KBM-7 (cell line): ENCODE measurements at regions of chr12 and their contacts with region 1.

Region 1: DNA sequence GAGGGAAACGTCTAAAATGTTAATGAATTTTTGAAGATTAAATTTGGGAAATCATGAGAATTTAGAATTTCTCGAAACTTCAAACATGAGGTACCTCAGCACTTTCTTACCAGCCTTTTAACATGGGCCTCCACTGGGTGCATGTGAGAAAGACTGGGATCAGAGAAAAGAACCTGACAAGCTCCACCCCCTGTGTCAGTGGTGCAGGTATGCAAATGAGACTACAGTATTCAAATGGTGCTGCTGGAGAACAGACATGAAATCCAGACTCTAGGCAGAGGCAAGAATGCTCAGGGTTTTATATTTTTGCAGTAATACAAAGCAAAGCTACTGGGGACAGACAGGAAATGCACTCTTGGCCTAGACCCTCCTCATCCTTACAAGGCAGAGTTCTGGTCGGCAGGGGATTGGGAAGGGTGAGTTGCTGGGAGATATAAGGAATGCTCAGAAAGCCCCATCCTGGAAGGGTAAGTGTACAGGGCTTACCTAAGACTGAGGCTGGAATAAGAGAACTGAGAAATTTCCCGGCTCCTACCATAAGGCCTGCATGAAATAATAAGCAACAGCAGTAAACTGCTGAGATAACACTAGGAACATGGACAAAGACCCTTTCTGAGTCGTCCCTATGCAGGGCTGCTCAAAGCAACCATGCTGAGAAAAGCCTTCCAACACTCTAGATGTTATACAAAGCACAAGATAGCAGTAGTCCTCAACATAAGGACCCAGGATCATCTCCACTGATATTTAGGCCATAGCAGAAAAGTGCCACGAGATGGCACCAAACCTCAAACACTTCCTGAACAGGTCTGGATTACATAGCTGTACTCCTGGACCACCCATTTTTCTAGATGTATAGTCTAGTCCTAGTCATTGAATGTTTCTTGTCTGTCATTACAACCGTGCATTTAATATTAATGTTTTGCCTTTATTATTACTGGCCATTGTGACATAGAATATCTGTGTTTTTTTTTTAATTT is 260.8 kb downstream of the RASSF9 start:
- DNase-seq: peak; percentile 71

Region 2: DNA sequence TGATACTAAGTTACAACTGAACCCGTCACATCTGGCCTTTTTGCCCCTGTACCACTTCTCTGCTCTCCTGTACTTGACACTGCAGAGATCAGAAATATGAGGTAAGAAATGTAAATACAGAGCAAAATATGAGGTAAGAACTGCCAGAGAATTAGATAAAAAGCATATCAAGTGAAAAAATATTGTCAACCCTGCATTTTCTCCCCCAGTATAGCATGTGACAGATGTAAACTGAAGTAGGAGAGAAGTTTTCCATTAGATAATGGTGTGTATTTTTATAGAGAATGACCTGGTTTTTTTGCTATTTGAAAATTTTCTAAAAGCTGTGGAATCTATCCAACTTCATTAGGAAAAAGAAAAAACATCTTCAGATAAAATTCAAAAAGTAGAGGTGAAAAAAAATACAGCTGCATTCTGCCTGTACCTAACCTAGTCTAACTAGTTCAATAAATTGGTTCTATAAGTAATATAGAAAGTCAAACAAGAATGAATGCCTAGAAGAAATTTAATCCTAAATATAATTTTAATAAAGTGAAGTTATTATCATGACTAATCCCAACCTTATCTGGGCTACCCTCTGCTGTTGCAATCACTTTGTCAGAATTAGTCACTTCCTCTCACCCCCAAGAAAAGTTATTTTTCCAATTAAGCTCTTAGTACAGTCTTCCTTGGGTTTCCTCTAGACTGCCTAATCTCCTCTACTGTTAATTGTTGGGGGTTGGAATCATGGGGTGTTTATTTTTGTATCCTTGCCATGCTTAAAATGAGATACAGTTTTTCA is 50.8 kb after region 1 on chr12:
- in situ Hi-C with region 1: no loop called
- DNase-seq: peak; percentile 51

Region 3: GRCh38 chr12:85866986-85867776 is 291.8 kb after region 1 on chr12:
- in situ Hi-C with region 1: loop called (anchors 25 kb)
- DNase-seq: peak; percentile 72